Activated naive CD4-positive, alpha-beta T cell treated with anti-CD3 and anti-CD28 coated beads for 36 hours (primary cell): ENCODE measurements at regions of chr10 and their contacts with region 1.

Region 1: GRCh38 chr10:63521416-63522276 is 445 bp downstream of the REEP3 start:
- DNase-seq: peak; percentile 59
- H3K4me3 Mint-ChIP-seq: peak overlapping the region; percentile 84
- H3K27ac Mint-ChIP-seq: peak overlapping the region; percentile 86
- H3K4me1 Mint-ChIP-seq: peaks cover 66% of the 10 kb centered on the region
- H3K27me3 Mint-ChIP-seq: no peaks in the 10 kb centered on the region

Region 2: GRCh38 chr10:63133056-63133820 is 388.4 kb before region 1 on chr10 and contains the start of gene NRBF2:
- CTCF ChIA-PET with region 1: no interaction called
- intact Hi-C with region 1: loop called (anchors 1 kb)
- DNase-seq: peak; percentile 98
- H3K4me3 Mint-ChIP-seq: peak within 1 kb of the TSS; percentile 89
- H3K27ac Mint-ChIP-seq: peak within 1 kb of the TSS; percentile 92
- H3K4me1 Mint-ChIP-seq: peaks cover 38% of the 10 kb centered on the region
- H3K27me3 Mint-ChIP-seq: no peaks in the 10 kb centered on the region
- total RNA-seq, gene NRBF2: 15.4 to 15.6 TPM

Region 3: GRCh38 chr10:63217120-63217605 is 304.5 kb before region 1 on chr10:
- CTCF ChIA-PET with region 1: interaction called, 6 read pairs
- intact Hi-C with region 1: loop called (anchors 1 kb)
- DNase-seq: no peak
- H3K4me3 Mint-ChIP-seq: no peak overlapping the region
- H3K27ac Mint-ChIP-seq: peak overlapping the region; percentile 13
- H3K4me1 Mint-ChIP-seq: peaks cover 49% of the 10 kb centered on the region
- H3K27me3 Mint-ChIP-seq: no peaks in the 10 kb centered on the region

Region 4: GRCh38 chr10:63465293-63466143 is 56.1 kb before region 1 on chr10 and contains the start of gene JMJD1C:
- CTCF ChIA-PET with region 1: no interaction called
- intact Hi-C with region 1: loop called (anchors 1 kb)
- DNase-seq: peak; percentile 69
- H3K4me3 Mint-ChIP-seq: peak within 1 kb of the TSS; percentile 92
- H3K27ac Mint-ChIP-seq: peak within 1 kb of the TSS; percentile 79
- H3K4me1 Mint-ChIP-seq: peaks cover 24% of the 10 kb centered on the region
- H3K27me3 Mint-ChIP-seq: no peaks in the 10 kb centered on the region
- total RNA-seq, gene JMJD1C: 54.1 to 56.6 TPM

Region 5: DNA sequence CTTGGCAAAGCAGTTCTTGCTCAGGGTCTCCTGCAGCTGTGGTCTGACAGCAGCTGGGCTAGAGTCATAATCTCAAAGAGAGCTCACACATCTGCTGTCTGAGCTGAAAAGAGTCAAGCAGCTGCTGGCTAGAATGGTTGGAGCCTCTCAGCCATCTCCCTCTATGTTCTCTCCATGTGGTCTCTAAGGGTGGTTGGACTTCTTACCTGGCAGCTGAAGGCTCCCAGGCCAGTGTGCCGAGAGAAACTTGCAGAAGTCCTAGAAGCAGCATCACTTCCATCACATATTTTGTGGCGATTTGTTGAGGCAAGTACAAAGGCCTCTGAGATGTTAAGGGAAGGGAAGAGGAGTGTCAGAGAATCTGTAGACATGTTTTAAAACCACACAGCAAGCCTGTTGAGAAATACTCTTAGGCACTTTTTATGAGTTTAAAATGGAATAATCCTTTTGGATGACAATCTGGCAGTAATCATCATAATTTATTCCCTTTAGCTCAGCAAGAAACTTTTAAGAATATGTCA is 92.8 kb after region 1 on chr10:
- CTCF ChIA-PET with region 1: no interaction called
- intact Hi-C with region 1: loop called (anchors 5 kb)
- DNase-seq: no peak
- H3K4me3 Mint-ChIP-seq: no peak overlapping the region
- H3K27ac Mint-ChIP-seq: no peak overlapping the region
- H3K4me1 Mint-ChIP-seq: peaks cover 14% of the 10 kb centered on the region
- H3K27me3 Mint-ChIP-seq: no peaks in the 10 kb centered on the region

Region 6: GRCh38 chr10:63829020-63829419 is 307.4 kb after region 1 on chr10:
- CTCF ChIA-PET with region 1: no interaction called
- intact Hi-C with region 1: no loop called
- DNase-seq: no peak
- H3K4me3 Mint-ChIP-seq: no peak overlapping the region
- H3K27ac Mint-ChIP-seq: no peak overlapping the region
- H3K4me1 Mint-ChIP-seq: no peaks in the 10 kb centered on the region
- H3K27me3 Mint-ChIP-seq: peaks cover 17% of the 10 kb centered on the region